ENCODE measurements at regions of chr5 and their contacts with region 1.

Region 1: GRCh38 chr5:147188200-147189108 is 46.4 kb upstream of the STK32A start:
- DNase-seq: peak; percentile 44 to 59 (median 59)
- H3K4me3 ChIP-seq: no peak overlapping the region
- H3K4me3 Mint-ChIP-seq: peak overlapping the region in 2 of 8 donors; percentile 43 to 73
- H3K27ac ChIP-seq: no peak overlapping the region
- H3K27ac Mint-ChIP-seq: peak overlapping the region in 1 of 7 donors; percentile 39
- H3K4me1 ChIP-seq: peaks cover 6% of the 10 kb centered on the region
- H3K4me1 Mint-ChIP-seq: peaks cover 4 to 7% (median 5%) of the 10 kb centered on the region in 4 donors
- H3K27me3 ChIP-seq: no peaks in the 10 kb centered on the region
- H3K27me3 Mint-ChIP-seq: peaks cover 3 to 8% of the 10 kb centered on the region in 2 donors

Region 2: DNA sequence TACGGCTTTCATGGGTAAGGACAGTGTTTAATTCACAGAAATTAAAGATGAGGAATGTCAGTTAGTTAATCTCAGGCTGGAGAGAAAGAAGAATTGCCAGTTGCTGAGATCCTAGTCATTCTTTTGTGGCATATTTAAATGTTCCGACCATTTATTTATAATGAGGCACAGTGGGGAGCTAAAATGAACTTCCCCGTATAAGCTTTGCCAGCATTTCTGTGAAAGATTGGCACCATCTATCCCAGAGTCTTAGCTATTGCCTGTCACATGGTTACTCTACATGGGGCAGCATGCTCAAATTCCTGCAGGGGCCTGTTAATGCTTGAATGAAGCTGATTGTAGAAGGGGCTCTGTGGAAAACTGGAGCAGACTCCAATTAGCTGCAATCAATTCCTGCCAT is 1667.4 kb before region 1 on chr5:
- CTCF ChIA-PET with region 1: no interaction called
- POLR2A ChIA-PET with region 1: no interaction called
- intact Hi-C with region 1: no loop called
- DNase-seq: no peak
- H3K4me3 ChIP-seq: no peak overlapping the region
- H3K4me3 Mint-ChIP-seq: no peak overlapping the region
- H3K27ac ChIP-seq: no peak overlapping the region
- H3K27ac Mint-ChIP-seq: no peak overlapping the region
- H3K4me1 ChIP-seq: no peaks in the 10 kb centered on the region
- H3K4me1 Mint-ChIP-seq: no peaks in the 10 kb centered on the region
- H3K27me3 ChIP-seq: no peaks in the 10 kb centered on the region
- H3K27me3 Mint-ChIP-seq: no peaks in the 10 kb centered on the region

Region 3: GRCh38 chr5:146541958-146542849 is 646.2 kb before region 1 on chr5:
- CTCF ChIA-PET with region 1: interaction called, 45 read pairs
- POLR2A ChIA-PET with region 1: no interaction called
- intact Hi-C with region 1: loop called (anchors 1 kb)
- DNase-seq: peak; percentile 47 to 63 (median 56)
- H3K4me3 ChIP-seq: no peak overlapping the region
- H3K4me3 Mint-ChIP-seq: no peak overlapping the region
- H3K27ac ChIP-seq: no peak overlapping the region
- H3K27ac Mint-ChIP-seq: peak overlapping the region in 1 of 7 donors; percentile 52
- H3K4me1 ChIP-seq: no peaks in the 10 kb centered on the region
- H3K4me1 Mint-ChIP-seq: peaks cover 0 to 4% (median 2%) of the 10 kb centered on the region in 4 donors
- H3K27me3 ChIP-seq: no peaks in the 10 kb centered on the region
- H3K27me3 Mint-ChIP-seq: peaks cover 0 to 1% of the 10 kb centered on the region in 2 donors

Region 4: GRCh38 chr5:146906803-146907202 is 281.7 kb before region 1 on chr5:
- CTCF ChIA-PET with region 1: no interaction called
- POLR2A ChIA-PET with region 1: no interaction called
- intact Hi-C with region 1: no loop called
- DNase-seq: no peak
- H3K4me3 ChIP-seq: no peak overlapping the region
- H3K4me3 Mint-ChIP-seq: no peak overlapping the region
- H3K27ac ChIP-seq: no peak overlapping the region
- H3K27ac Mint-ChIP-seq: no peak overlapping the region
- H3K4me1 ChIP-seq: peaks cover 3% of the 10 kb centered on the region
- H3K4me1 Mint-ChIP-seq: peaks cover 0 to 3% (median under 1%) of the 10 kb centered on the region in 4 donors
- H3K27me3 ChIP-seq: no peaks in the 10 kb centered on the region
- H3K27me3 Mint-ChIP-seq: peaks cover 2 to 3% of the 10 kb centered on the region in 2 donors

Region 5: GRCh38 chr5:146965761-146966659 is 222.4 kb before region 1 on chr5:
- CTCF ChIA-PET with region 1: interaction called, 16 read pairs
- POLR2A ChIA-PET with region 1: no interaction called
- intact Hi-C with region 1: loop called (anchors 10 kb)
- DNase-seq: peak; percentile 41 to 66 (median 55)
- H3K4me3 ChIP-seq: no peak overlapping the region
- H3K4me3 Mint-ChIP-seq: no peak overlapping the region
- H3K27ac ChIP-seq: no peak overlapping the region
- H3K27ac Mint-ChIP-seq: peak overlapping the region in 1 of 7 donors; percentile 6
- H3K4me1 ChIP-seq: no peaks in the 10 kb centered on the region
- H3K4me1 Mint-ChIP-seq: peaks cover 0 to 2% (median 0%) of the 10 kb centered on the region in 4 donors
- H3K27me3 ChIP-seq: no peaks in the 10 kb centered on the region
- H3K27me3 Mint-ChIP-seq: no peaks in the 10 kb centered on the region

Region 6: GRCh38 chr5:147065071-147065470 is 123.4 kb before region 1 on chr5:
- CTCF ChIA-PET with region 1: no interaction called
- POLR2A ChIA-PET with region 1: no interaction called
- intact Hi-C with region 1: no loop called
- DNase-seq: no peak
- H3K4me3 ChIP-seq: no peak overlapping the region
- H3K4me3 Mint-ChIP-seq: peak overlapping the region; percentile 6 to 62 (median 36)
- H3K27ac ChIP-seq: no peak overlapping the region
- H3K27ac Mint-ChIP-seq: peak overlapping the region in 1 of 7 donors; percentile 77
- H3K4me1 ChIP-seq: no peaks in the 10 kb centered on the region
- H3K4me1 Mint-ChIP-seq: peaks cover 6 to 9% (median 8%) of the 10 kb centered on the region in 4 donors
- H3K27me3 ChIP-seq: no peaks in the 10 kb centered on the region
- H3K27me3 Mint-ChIP-seq: no peaks in the 10 kb centered on the region

Region 7: DNA sequence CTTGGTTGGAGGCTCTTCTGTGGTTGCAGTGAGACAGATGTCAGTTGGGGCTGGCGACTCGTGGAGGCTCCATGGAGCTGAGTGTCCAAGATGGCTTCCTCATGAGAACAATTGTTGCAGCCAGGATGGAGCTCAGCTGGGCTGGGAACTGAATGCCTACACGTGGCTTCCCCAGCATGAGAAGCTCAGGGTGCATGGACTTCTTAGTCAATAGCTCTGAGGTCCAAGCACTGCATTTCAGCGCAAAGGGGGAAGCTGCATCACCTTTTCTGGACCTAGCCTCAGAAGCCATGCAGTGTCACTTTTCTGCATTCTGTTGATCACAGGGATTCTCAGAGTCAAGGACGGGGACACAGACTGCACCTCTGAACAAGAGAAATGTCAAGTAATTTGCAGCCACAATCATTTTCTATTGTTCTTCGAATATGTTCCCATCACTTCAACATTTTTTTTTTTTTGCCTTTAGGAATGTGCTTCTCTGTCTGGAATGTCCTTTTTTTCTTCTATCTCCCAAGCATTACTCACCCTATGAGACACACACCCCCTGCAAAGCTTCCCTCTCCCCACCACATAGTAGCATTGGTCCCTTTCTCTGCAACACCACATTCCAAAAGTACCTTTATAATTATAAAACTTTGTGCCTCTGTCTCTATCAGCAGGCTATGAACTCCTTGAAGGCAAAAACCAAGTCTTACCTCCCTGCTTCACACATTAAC is 11.2 kb before region 1 on chr5:
- CTCF ChIA-PET with region 1: interaction called, 47 read pairs
- POLR2A ChIA-PET with region 1: no interaction called
- intact Hi-C with region 1: no loop called
- DNase-seq: no peak
- H3K4me3 ChIP-seq: no peak overlapping the region
- H3K4me3 Mint-ChIP-seq: no peak overlapping the region
- H3K27ac ChIP-seq: no peak overlapping the region
- H3K27ac Mint-ChIP-seq: no peak overlapping the region
- H3K4me1 ChIP-seq: no peaks in the 10 kb centered on the region
- H3K4me1 Mint-ChIP-seq: no peaks in the 10 kb centered on the region
- H3K27me3 ChIP-seq: no peaks in the 10 kb centered on the region
- H3K27me3 Mint-ChIP-seq: peaks cover 0 to 4% of the 10 kb centered on the region in 2 donors

Region 8: GRCh38 chr5:147216552-147217154 is 28.2 kb after region 1 on chr5:
- CTCF ChIA-PET with region 1: interaction called, 12 read pairs
- POLR2A ChIA-PET with region 1: no interaction called
- intact Hi-C with region 1: no loop called
- DNase-seq: peak in 4 of 5 donors; percentile 15 to 30 (median 22)
- H3K4me3 ChIP-seq: no peak overlapping the region
- H3K4me3 Mint-ChIP-seq: peak overlapping the region in 7 of 8 donors; percentile 30 to 55 (median 41)
- H3K27ac ChIP-seq: no peak overlapping the region
- H3K27ac Mint-ChIP-seq: peak overlapping the region in 6 of 7 donors; percentile 7 to 83 (median 60)
- H3K4me1 ChIP-seq: peaks cover 7% of the 10 kb centered on the region
- H3K4me1 Mint-ChIP-seq: peaks cover 0 to 7% (median 1%) of the 10 kb centered on the region in 4 donors
- H3K27me3 ChIP-seq: no peaks in the 10 kb centered on the region
- H3K27me3 Mint-ChIP-seq: no peaks in the 10 kb centered on the region

Region 9: DNA sequence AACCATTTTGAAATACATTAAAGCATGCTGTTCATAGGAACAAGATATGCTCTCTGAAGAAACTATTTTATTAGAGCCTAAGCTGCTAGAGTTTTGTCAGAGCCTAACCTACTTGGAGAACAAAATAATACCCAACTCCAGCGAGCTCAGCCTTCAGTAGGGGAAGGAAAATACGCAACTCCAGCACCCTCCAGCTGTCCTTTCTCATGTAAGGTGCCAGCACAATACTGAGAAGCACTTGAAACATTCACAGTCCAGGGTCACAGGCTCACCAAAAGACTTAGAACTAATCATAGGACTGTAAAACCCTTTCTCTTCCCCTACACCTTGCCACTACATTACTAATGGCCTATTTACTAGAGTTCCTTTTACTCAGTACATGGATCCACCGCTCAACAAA is 302.5 kb after region 1 on chr5:
- CTCF ChIA-PET with region 1: no interaction called
- POLR2A ChIA-PET with region 1: no interaction called
- intact Hi-C with region 1: no loop called
- DNase-seq: no peak
- H3K4me3 ChIP-seq: no peak overlapping the region
- H3K4me3 Mint-ChIP-seq: no peak overlapping the region
- H3K27ac ChIP-seq: no peak overlapping the region
- H3K27ac Mint-ChIP-seq: no peak overlapping the region
- H3K4me1 ChIP-seq: no peaks in the 10 kb centered on the region
- H3K4me1 Mint-ChIP-seq: no peaks in the 10 kb centered on the region
- H3K27me3 ChIP-seq: no peaks in the 10 kb centered on the region
- H3K27me3 Mint-ChIP-seq: peaks cover 0 to 8% of the 10 kb centered on the region in 2 donors